ENCODE measurements at regions of chr2 and their contacts with region 1.

Region 1: DNA sequence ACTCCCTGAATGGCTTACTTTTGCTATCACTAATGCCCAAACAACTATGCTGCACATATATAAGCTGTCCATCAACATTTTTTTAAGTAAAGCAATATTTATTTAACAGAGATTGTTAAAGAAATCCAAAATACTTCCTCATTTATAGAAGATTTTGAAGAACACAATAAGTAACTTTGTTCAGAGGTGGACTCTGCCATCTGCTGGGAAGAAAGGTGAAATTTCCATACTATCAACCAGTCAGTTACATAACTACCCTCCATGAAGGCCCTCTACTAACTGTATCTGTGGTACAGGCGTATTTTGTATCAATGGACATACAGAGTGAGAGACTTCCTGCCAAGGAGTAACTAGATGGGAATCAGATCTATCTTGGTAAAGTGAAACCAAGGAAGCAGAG is 106.0 kb downstream of the DTNB start:
- DNase-seq: peak; percentile 67
- ATAC-seq: peak; percentile 85
- H3K4me3 ChIP-seq: no peak overlapping the region
- H3K27ac ChIP-seq: peak overlapping the region; percentile 75
- H3K4me1 ChIP-seq: peaks cover 23% of the 10 kb centered on the region
- H3K27me3 ChIP-seq: no peaks in the 10 kb centered on the region
- CTCF ChIP-seq: peak; percentile 47 to 68 (median 60)
- EP300 ChIP-seq: no peak
- POLR2A ChIP-seq: no peak
- RAD21 ChIP-seq: peak; percentile 78

Region 2: GRCh38 chr2:25215948-25216679 is 351.3 kb before region 1 on chr2:
- CTCF ChIA-PET with region 1: interaction called, 6 read pairs
- POLR2A ChIA-PET with region 1: no interaction called
- RAD21 ChIA-PET with region 1: no interaction called
- SMC1A ChIA-PET with region 1: no interaction called
- in situ Hi-C with region 1: no loop called
- intact Hi-C with region 1: loop called (anchors 10 kb)
- DNase-seq: no peak
- ATAC-seq: peak; percentile 89
- H3K4me3 ChIP-seq: peak overlapping the region; percentile 65; the same call in 1 of the 2 replicates
- H3K27ac ChIP-seq: peak overlapping the region; percentile 29; the same call in 1 of the 2 replicates
- H3K4me1 ChIP-seq: peaks cover under 1% of the 10 kb centered on the region
- H3K27me3 ChIP-seq: no peaks in the 10 kb centered on the region
- CTCF ChIP-seq: no peak
- EP300 ChIP-seq: no peak
- POLR2A ChIP-seq: peak; percentile 83
- RAD21 ChIP-seq: no peak

Region 3: GRCh38 chr2:25301453-25302352 is 265.7 kb before region 1 on chr2:
- CTCF ChIA-PET with region 1: interaction called, 7 read pairs
- POLR2A ChIA-PET with region 1: interaction called, 3 read pairs
- RAD21 ChIA-PET with region 1: interaction called, 8 read pairs
- SMC1A ChIA-PET with region 1: interaction called, 7 read pairs
- in situ Hi-C with region 1: no loop called
- intact Hi-C with region 1: loop called (anchors 5 kb)
- DNase-seq: peak; percentile 95
- ATAC-seq: peak; percentile 95
- H3K4me3 ChIP-seq: peak overlapping the region; percentile 43
- H3K27ac ChIP-seq: peak overlapping the region; percentile 54
- H3K4me1 ChIP-seq: peaks cover 36% of the 10 kb centered on the region
- H3K27me3 ChIP-seq: no peaks in the 10 kb centered on the region
- CTCF ChIP-seq: no peak
- EP300 ChIP-seq: peak; percentile 89 to 92
- POLR2A ChIP-seq: peak; percentile 46; the same call in 1 of the 2 replicates
- RAD21 ChIP-seq: no peak

Region 4: DNA sequence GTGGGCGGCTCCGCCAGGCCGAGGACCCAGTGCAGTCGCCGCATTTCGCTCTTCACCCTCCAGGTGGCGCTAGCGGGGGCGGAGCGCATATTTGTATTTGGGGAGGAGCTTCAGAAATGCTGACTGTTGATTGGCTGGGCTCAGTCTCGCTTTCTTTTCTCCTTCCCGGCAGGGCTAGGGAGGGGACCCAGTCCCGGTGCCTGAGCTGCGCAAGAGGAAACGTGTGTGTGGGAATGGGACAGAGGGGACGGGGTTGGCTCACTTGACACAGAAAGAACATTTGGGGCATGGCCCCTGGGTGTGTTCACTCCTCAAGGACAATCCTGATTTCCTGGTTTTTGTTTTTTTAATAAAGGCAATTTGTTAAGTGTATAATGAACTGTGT is 205.4 kb before region 1 on chr2:
- CTCF ChIA-PET with region 1: interaction called, 19 read pairs
- POLR2A ChIA-PET with region 1: interaction called, 5 read pairs
- RAD21 ChIA-PET with region 1: interaction called, 30 read pairs
- SMC1A ChIA-PET with region 1: interaction called, 19 read pairs
- in situ Hi-C with region 1: no loop called
- intact Hi-C with region 1: loop called (anchors 1 kb)
- DNase-seq: peak; percentile 88
- ATAC-seq: peak; percentile 92
- H3K4me3 ChIP-seq: peak overlapping the region; percentile 72
- H3K27ac ChIP-seq: peak overlapping the region; percentile 84
- H3K4me1 ChIP-seq: peaks cover 13% of the 10 kb centered on the region
- H3K27me3 ChIP-seq: no peaks in the 10 kb centered on the region
- CTCF ChIP-seq: peak; percentile 93 to 99 (median 95)
- EP300 ChIP-seq: no peak; a peak in 1 of 4 replicates
- POLR2A ChIP-seq: peak; percentile 87
- RAD21 ChIP-seq: peak; percentile 37; the same call in 1 of the 2 replicates

Region 5: GRCh38 chr2:25521665-25522387 is 45.6 kb before region 1 on chr2:
- CTCF ChIA-PET with region 1: interaction called, 28 read pairs
- POLR2A ChIA-PET with region 1: interaction called, 8 read pairs
- RAD21 ChIA-PET with region 1: interaction called, 35 read pairs
- SMC1A ChIA-PET with region 1: interaction called, 33 read pairs
- in situ Hi-C with region 1: no loop called
- intact Hi-C with region 1: loop called (anchors 2 kb)
- DNase-seq: peak; percentile 90
- ATAC-seq: peak; percentile 94
- H3K4me3 ChIP-seq: no peak overlapping the region
- H3K27ac ChIP-seq: peak overlapping the region; percentile 67
- H3K4me1 ChIP-seq: peaks cover 6% of the 10 kb centered on the region; the same call in 1 of the 2 replicates
- H3K27me3 ChIP-seq: no peaks in the 10 kb centered on the region
- CTCF ChIP-seq: peak; percentile 75 to 86 (median 81)
- EP300 ChIP-seq: 0 out of 4 replicates have a peak, but pooled peaks of 1 of the 2 experiments have one; percentile 12
- POLR2A ChIP-seq: no peak
- RAD21 ChIP-seq: peak; percentile 99

Region 6: GRCh38 chr2:25592766-25593292 is 25.4 kb after region 1 on chr2:
- CTCF ChIA-PET with region 1: interaction called, 13 read pairs
- POLR2A ChIA-PET with region 1: no interaction called
- RAD21 ChIA-PET with region 1: interaction called, 6 read pairs
- SMC1A ChIA-PET with region 1: interaction called, 18 read pairs
- in situ Hi-C with region 1: no loop called
- intact Hi-C with region 1: no loop called
- DNase-seq: no peak
- ATAC-seq: no peak; the same call in 2 of the 3 replicates
- H3K4me3 ChIP-seq: no peak overlapping the region
- H3K27ac ChIP-seq: no peak overlapping the region
- H3K4me1 ChIP-seq: peaks cover 19% of the 10 kb centered on the region
- H3K27me3 ChIP-seq: no peaks in the 10 kb centered on the region
- CTCF ChIP-seq: no peak
- EP300 ChIP-seq: no peak
- POLR2A ChIP-seq: no peak
- RAD21 ChIP-seq: no peak

Region 7: GRCh38 chr2:25700221-25700660 is 132.8 kb after region 1 on chr2:
- CTCF ChIA-PET with region 1: interaction called, 10 read pairs
- POLR2A ChIA-PET with region 1: no interaction called
- RAD21 ChIA-PET with region 1: no interaction called
- SMC1A ChIA-PET with region 1: no interaction called
- in situ Hi-C with region 1: no loop called
- intact Hi-C with region 1: no loop called
- DNase-seq: no peak
- ATAC-seq: peak; percentile 86
- H3K4me3 ChIP-seq: no peak overlapping the region
- H3K27ac ChIP-seq: no peak overlapping the region
- H3K4me1 ChIP-seq: no peaks in the 10 kb centered on the region
- H3K27me3 ChIP-seq: peaks cover 4 to 5% of the 10 kb centered on the region in 2 experiments; a peak in 2 of 4 replicates
- CTCF ChIP-seq: peak; percentile 69 to 80 (median 70)
- EP300 ChIP-seq: no peak
- POLR2A ChIP-seq: no peak
- RAD21 ChIP-seq: peak; percentile 65

Measured in GM12878 (cell line).